Activated T-helper 1 cell treated with anti-CD3 and anti-CD28 coated beads, Interleukin-12 subunit alpha, Interleukin-12 subunit beta, Interleukin-2, Interleukin-4 antibody, amounts not matched to agents 30 ng/mL and 10 ng/mL and 1 ng/mL, durations not matched to agents 14 hours and 24 hours and 36 hours (primary cell): ENCODE measurements at regions of chr6 and their contacts with region 1.

Region 1: DNA sequence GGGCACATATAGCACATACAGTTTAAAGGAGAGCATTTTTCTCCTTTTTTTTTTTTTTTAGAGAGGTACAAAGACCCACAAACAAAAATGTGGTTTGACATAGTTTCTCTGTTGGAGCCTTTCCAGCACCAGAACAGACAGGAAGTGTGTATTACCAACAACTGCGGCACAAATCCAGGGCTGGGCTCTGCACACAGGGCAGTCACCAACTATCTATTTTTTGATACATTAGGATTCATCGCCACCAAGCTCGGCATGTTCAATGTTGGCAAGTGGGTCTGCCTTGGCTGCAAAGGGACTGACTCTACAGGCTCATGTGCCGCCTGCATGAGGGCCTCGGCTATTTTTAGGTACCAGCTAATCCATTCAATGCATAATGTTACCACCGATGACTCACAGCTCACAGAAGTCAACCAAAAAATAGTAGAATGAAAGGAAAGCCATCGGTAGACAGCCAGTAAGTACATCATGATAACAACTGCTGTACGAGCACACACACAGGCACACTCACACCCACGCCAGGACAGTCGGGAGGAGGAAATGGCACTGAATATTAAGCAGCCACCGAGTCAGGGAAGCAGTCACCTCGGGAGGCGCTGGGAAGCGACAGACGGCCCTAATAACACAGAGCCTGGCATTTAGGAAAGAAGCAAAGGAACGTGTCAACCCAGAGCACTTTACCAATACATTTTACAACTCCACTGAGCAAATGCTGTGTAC is 81.6 kb downstream of the GMPR start:
- DNase-seq: peak; percentile 65
- H3K4me3 Mint-ChIP-seq: peak overlapping the region; percentile 56
- H3K27ac Mint-ChIP-seq: peak overlapping the region; percentile 81
- H3K4me1 Mint-ChIP-seq: peaks cover 76% of the 10 kb centered on the region
- H3K27me3 Mint-ChIP-seq: no peaks in the 10 kb centered on the region

Region 2: GRCh38 chr6:15254070-15254841 is 1065.7 kb before region 1 on chr6:
- intact Hi-C with region 1: loop called (anchors 5 kb)
- DNase-seq: no peak
- H3K4me3 Mint-ChIP-seq: peak overlapping the region; percentile 41
- H3K27ac Mint-ChIP-seq: peak overlapping the region; percentile 92
- H3K4me1 Mint-ChIP-seq: peaks cover 98% of the 10 kb centered on the region
- H3K27me3 Mint-ChIP-seq: no peaks in the 10 kb centered on the region

Region 3: DNA sequence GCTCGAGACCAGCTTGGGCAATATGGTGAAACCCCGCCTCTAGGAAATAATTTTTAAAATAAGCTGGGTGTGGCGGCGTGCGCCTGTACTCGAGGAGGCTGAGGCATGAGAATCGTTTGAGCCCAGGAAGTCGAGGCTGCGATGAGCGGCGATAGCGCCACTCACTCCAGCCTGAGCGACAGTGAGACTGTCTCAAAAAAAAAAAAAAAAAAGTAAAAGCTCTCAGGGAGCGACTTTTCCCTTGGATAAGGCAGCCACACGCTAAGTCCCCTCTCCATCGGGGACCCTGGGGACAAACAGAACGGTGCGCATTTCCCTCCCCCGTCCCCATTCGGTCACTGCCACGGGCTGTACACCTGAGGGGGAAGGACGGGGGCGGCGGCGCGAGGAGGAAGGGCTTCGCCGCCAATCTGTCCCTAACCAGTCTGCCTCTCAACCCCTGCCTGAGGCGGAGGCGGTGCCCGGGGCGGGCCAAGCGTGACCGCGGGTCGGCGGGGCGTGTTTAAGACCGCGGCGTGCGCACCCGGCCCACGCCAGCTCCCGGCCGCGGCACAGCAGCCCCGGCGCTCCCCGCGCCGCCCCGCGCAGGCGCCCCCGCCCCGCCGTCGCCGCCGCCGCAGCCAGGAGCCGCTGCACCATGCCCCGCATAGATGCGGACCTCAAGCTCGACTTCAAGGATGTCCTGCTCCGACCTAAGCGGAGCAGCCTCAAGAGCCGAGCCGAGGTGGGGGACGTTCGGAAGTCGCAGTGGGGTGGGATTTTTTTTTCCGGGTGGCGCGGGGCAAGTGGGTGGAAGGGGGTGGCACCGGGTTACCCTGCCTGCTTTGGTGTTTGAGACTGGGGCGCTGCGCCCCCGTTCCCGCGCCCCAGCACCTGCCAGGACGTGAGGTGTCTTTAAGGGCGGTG is 81.7 kb before region 1 on chr6 and contains the start of gene GMPR:
- intact Hi-C with region 1: loop called (anchors 2 kb)
- DNase-seq: peak; percentile 76
- H3K4me3 Mint-ChIP-seq: peak within 1 kb of the TSS; percentile 84
- H3K27ac Mint-ChIP-seq: peak within 1 kb of the TSS; percentile 64
- H3K4me1 Mint-ChIP-seq: peaks cover 26% of the 10 kb centered on the region
- H3K27me3 Mint-ChIP-seq: peaks cover 41% of the 10 kb centered on the region
- total RNA-seq, gene GMPR: 0.96 and 1.2 TPM in 2 replicates

Region 4: DNA sequence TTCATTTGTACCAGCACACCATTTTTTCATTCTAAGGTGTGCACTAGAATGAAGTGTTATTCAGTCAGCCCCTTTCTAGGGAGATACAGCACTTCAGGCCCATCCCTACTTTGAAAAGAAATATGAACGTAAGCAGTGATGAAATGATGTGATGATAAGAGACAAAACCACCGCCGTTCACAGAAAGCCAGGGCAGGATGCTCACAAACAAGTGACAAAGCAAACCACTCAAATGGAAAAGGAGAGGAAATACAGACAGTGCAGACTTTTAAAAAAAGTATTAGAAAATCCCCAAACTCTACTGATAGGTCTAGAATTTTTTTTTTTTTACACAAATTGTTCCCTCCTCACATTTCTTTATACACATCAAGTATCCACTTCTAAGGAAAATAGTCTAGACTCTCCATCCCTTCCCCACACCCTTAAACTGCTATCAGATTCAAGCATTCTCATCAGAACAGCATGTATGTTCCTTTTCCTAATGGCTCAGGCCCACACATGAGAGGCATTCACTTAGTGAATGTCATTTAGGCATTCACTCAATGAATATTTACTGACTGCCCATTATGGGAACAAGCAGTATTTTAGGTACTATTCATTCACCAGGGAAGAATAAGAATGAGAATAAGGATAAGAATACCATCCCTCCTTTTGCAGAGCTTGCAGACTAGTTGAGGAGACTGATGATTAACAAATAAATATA is 161.9 kb after region 1 on chr6:
- intact Hi-C with region 1: loop called (anchors 1 kb)
- DNase-seq: peak; percentile 74
- H3K4me3 Mint-ChIP-seq: peak overlapping the region; percentile 56
- H3K27ac Mint-ChIP-seq: peak overlapping the region; percentile 97
- H3K4me1 Mint-ChIP-seq: peaks cover 89% of the 10 kb centered on the region
- H3K27me3 Mint-ChIP-seq: no peaks in the 10 kb centered on the region

Region 5: GRCh38 chr6:16731478-16732051 is 411.6 kb after region 1 on chr6:
- intact Hi-C with region 1: loop called (anchors 1 kb)
- DNase-seq: peak; percentile 36
- H3K4me3 Mint-ChIP-seq: peak overlapping the region; percentile 51
- H3K27ac Mint-ChIP-seq: peak overlapping the region; percentile 89
- H3K4me1 Mint-ChIP-seq: peaks cover 71% of the 10 kb centered on the region
- H3K27me3 Mint-ChIP-seq: no peaks in the 10 kb centered on the region

Region 6: DNA sequence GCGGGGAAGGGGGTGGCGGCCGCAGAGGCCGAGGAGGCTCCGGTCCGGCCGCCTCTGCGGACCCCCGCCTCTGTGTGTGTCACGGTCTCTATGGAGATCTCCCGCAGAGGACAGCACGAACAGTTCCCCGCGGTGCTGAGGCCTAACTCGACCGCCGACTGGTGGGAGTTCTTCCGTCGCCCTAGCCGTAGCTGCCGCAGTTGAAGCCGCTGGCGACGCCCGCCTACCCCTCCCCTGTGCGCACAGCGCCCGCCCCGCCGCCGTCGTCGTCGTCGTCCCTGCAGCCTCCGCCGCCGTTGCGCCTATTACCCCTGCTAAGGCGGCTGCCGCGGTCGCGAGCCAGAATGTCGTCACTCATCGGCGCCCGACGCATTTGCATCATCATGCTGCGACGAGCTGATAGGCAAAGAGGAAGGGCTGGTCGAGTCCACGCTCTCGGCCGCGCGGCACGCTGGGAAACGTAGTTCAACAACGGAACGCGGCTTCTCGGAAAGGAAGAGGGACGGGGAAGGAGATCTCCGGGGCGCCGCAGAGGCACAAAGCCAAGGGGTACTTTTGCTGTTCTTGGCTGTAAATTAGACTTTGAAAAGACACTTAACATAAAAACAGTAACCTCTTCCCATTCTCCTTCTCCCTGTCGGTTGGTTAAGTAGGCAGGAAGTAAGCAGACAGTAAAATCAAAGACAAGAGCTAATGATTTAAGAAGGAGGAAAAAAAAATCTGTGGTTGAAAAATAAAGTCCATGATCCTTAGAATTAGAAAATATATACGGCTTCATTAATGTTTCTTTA is 1386.8 kb after region 1 on chr6 and contains the start of gene NUP153:
- intact Hi-C with region 1: loop called (anchors 10 kb)
- DNase-seq: peak; percentile 100
- H3K4me3 Mint-ChIP-seq: peak within 1 kb of the TSS; percentile 90
- H3K27ac Mint-ChIP-seq: peak within 1 kb of the TSS; percentile 97
- H3K4me1 Mint-ChIP-seq: peaks cover 45% of the 10 kb centered on the region
- H3K27me3 Mint-ChIP-seq: no peaks in the 10 kb centered on the region
- total RNA-seq, gene NUP153: 106 and 109 TPM in 2 replicates